AG04450 (cell line): ENCODE measurements at regions of chr1 and their contacts with region 1.

Region 1: DNA sequence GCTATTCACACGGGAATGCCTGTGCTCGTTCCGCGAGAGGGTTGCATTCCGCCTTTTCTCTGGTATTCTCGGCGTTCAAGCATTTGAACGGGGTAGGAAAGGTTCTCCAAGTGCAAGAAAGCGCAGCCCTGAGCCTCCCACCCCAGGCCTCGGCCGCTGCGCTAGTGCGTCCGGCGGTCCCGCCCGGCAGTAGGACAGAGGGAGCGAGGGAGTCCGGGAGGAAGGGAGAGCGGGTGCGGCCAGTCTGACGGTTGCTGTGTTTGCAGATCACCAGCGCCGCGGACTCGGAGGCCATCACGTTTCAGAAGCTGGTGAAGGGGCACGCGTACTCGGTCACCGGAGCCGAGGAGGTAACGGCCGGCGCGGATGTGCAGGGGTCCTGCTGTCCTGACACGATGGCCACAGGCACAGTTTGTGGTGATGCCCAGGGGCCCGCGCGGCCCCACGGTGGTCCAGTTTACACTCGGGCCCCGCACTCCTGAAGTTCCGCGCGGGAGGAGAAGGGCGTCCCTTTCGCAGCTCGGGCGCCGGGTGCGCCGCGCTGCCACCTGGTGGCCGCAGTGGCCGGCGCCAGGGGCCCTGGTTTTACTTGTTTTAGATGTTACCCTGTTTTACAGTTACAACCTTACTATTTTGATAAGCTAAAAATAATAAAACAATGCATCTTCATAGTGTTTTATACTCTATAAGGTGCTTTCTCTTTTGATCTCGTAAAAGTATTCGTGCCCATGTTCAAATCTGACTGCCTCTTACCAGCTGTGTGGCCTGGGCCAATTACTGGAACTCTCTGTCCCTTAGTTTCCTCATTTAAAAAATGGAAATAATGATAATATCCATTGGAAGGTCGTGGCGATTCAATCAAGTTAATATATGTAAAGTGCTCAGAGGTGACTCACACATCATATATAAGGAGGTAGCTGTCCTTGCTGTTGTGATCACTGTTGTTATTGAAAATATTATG is 36.7 kb downstream of the CAPN2 start:
- DNase-seq: no peak
- H3K4me3 ChIP-seq: peak overlapping the region; percentile 38
- H3K27ac ChIP-seq: peak overlapping the region; percentile 58
- H3K27me3 ChIP-seq: no peaks in the 10 kb centered on the region
- CTCF ChIP-seq: peak; percentile 87

Region 2: DNA sequence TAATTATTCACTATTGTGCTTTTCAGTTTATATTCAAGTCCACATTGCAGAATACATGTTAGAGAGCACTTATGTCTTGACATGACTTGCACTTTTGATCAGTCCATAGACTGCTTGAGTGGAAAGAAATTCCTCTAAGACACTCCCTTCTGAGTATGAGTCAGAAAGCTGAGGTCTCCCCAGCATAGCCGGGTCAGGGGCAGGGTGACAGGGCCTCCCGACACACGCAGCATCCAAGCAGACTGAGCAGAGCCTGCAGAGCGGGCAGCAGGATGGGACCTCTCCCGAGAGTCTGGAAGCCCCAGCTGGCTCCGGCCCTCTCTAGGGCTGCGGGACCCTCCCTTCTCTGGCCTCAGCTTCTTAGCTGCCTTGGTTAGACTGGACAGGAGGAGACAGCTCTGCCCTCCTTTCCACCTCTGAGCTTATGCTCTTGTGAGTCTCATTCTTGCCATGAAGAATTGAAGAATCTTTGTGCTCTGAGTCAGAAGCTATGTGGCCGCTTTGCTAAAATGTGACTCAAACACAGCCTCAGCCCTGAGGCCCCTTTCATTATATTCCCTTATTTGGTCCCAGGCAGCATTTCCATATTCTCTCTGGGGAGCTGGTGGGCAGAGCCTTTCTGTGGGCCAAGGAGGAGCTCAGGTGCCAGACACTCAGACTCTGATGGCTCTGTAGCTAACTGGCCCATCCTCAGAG is 48.0 kb before region 1 on chr1:
- CTCF ChIA-PET with region 1: interaction called, 69 read pairs
- POLR2A ChIA-PET with region 1: interaction called, 19 read pairs
- DNase-seq: peak; percentile 95
- H3K4me3 ChIP-seq: peak overlapping the region; percentile 54
- H3K27ac ChIP-seq: peak overlapping the region; percentile 100
- H3K27me3 ChIP-seq: no peaks in the 10 kb centered on the region
- CTCF ChIP-seq: no peak

Region 3: GRCh38 chr1:223720928-223721591 is 28.0 kb before region 1 on chr1:
- CTCF ChIA-PET with region 1: interaction called, 18 read pairs
- POLR2A ChIA-PET with region 1: interaction called, 15 read pairs
- DNase-seq: peak; percentile 85
- H3K4me3 ChIP-seq: no peak overlapping the region
- H3K27ac ChIP-seq: peak overlapping the region; percentile 96
- H3K27me3 ChIP-seq: no peaks in the 10 kb centered on the region
- CTCF ChIP-seq: no peak

Region 4: DNA sequence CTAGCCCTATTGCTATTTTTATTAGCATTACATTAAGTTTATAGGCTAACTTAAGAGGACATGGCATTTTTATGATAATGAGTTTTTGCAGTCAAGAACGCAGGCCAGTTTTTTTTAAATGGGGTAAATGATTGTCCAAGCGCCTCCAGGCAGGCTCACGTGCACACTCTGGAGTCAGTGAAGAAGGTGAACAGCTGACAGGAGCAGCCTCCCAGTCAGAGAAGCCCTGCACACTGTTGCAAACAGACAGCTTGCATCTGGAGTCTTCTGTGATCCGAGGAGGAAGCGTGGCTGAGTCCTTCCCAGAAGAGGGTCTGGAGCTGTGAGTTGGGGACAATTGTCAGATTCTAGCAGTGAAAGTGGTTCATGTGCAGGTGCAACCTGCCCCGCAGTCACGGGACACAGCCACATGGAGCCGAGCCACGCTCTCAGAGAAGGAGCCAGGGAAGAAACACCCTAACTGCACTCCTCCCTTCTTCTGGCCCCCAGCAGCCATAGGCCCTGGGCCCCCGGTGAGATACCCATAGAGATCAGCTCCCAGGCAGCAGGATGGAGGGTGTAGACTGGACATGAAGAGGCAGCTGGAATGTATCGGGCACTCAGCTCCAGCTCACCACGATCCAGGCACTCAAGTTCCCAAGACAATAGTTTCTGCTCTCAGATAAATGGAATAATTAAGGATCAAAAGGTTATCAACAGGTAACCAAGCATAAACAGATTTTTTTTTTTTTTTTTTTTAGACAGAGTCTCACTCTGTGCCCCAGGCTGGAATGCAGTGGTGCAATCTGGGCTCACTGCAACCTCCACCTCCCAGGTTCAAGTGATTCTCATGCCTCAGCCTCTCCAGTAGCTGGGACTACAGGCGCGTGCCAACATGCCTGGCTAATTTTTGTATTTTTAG is 10.3 kb before region 1 on chr1:
- CTCF ChIA-PET with region 1: interaction called, 31 read pairs
- POLR2A ChIA-PET with region 1: no interaction called
- DNase-seq: no peak
- H3K4me3 ChIP-seq: no peak overlapping the region
- H3K27ac ChIP-seq: peak overlapping the region; percentile 11
- H3K27me3 ChIP-seq: no peaks in the 10 kb centered on the region
- CTCF ChIP-seq: no peak

Region 5: GRCh38 chr1:223776075-223776814 is 27.2 kb after region 1 on chr1:
- CTCF ChIA-PET with region 1: interaction called, 12 read pairs
- POLR2A ChIA-PET with region 1: no interaction called
- DNase-seq: peak; percentile 34
- H3K4me3 ChIP-seq: no peak overlapping the region
- H3K27ac ChIP-seq: peak overlapping the region; percentile 68
- H3K27me3 ChIP-seq: no peaks in the 10 kb centered on the region
- CTCF ChIP-seq: no peak